Naive thymus-derived CD4-positive, alpha-beta T cell (primary cell): ENCODE measurements at regions of chr1 and their contacts with region 1.

Region 1: GRCh38 chr1:161864577-161864976 is 98.5 kb downstream of the ATF6 start:
- DNase-seq: peak in 7 of 9 donors; percentile 2 to 46 (median 28)
- ATAC-seq: peak; percentile 37
- H3K4me3 ChIP-seq: no peak overlapping the region
- H3K4me3 Mint-ChIP-seq: no peak overlapping the region
- H3K27ac ChIP-seq: no peak overlapping the region
- H3K27ac Mint-ChIP-seq: peak overlapping the region in 2 of 9 donors; percentile 5 to 12
- H3K4me1 ChIP-seq: no peaks in the 10 kb centered on the region
- H3K4me1 Mint-ChIP-seq: no peaks in the 10 kb centered on the region
- H3K27me3 ChIP-seq: no peaks in the 10 kb centered on the region
- H3K27me3 Mint-ChIP-seq: no peaks in the 10 kb centered on the region

Region 2: GRCh38 chr1:161261261-161262235 is 603.0 kb before region 1 on chr1:
- CTCF ChIA-PET with region 1: no interaction called
- POLR2A ChIA-PET with region 1: no interaction called
- intact Hi-C with region 1: no loop called
- DNase-seq: no peak
- ATAC-seq: no peak
- H3K4me3 ChIP-seq: no peak overlapping the region
- H3K4me3 Mint-ChIP-seq: no peak overlapping the region
- H3K27ac ChIP-seq: no peak overlapping the region
- H3K27ac Mint-ChIP-seq: no peak overlapping the region
- H3K4me1 ChIP-seq: peaks cover 0 to 4% of the 10 kb centered on the region in 2 donors
- H3K4me1 Mint-ChIP-seq: peaks cover 6 to 24% (median 19%) of the 10 kb centered on the region in 7 donors
- H3K27me3 ChIP-seq: peaks cover 0 to 13% of the 10 kb centered on the region in 2 donors
- H3K27me3 Mint-ChIP-seq: peaks cover 57 to 64% (median 59%) of the 10 kb centered on the region in 5 donors

Region 3: DNA sequence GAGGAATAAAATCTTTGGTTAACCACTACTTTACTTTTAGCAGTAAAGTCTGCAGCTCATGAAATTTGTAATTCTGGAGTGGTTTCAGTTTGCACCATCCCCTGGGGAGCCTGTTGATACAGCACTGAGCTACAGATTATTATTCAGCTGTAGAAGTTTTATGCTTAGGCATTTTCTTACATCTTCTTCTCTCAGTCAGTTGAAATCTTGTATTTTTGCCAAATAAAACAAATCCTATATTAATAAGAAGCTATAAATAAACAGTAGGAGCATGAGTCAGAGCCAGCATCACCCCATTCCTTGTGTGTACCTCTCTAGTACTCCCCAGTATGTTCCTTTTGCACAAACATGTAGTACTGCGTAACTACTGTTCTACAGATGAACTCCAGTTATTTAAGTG is 20.4 kb after region 1 on chr1:
- CTCF ChIA-PET with region 1: interaction called, 3 read pairs
- POLR2A ChIA-PET with region 1: no interaction called
- intact Hi-C with region 1: loop called in 1 of 2 experiments (anchors 2 kb)
- DNase-seq: no peak
- ATAC-seq: no peak
- H3K4me3 ChIP-seq: no peak overlapping the region
- H3K4me3 Mint-ChIP-seq: no peak overlapping the region
- H3K27ac ChIP-seq: no peak overlapping the region
- H3K27ac Mint-ChIP-seq: peak overlapping the region in 1 of 9 donors; percentile 31
- H3K4me1 ChIP-seq: no peaks in the 10 kb centered on the region
- H3K4me1 Mint-ChIP-seq: peaks cover 0 to 11% (median 1%) of the 10 kb centered on the region in 7 donors
- H3K27me3 ChIP-seq: no peaks in the 10 kb centered on the region
- H3K27me3 Mint-ChIP-seq: no peaks in the 10 kb centered on the region

Region 4: GRCh38 chr1:162023547-162024501 is 159.2 kb after region 1 on chr1 and contains the start of gene OLFML2B:
- CTCF ChIA-PET with region 1: interaction called, 19 read pairs
- POLR2A ChIA-PET with region 1: no interaction called
- intact Hi-C with region 1: loop called in 1 of 2 experiments (anchors 1 kb)
- DNase-seq: peak; percentile 15 to 66 (median 49)
- ATAC-seq: peak; percentile 88
- H3K4me3 ChIP-seq: peak within 1 kb of the TSS; percentile 80
- H3K4me3 Mint-ChIP-seq: peak within 1 kb of the TSS; percentile 89 to 99 (median 94)
- H3K27ac ChIP-seq: no peak within 1 kb of the TSS
- H3K27ac Mint-ChIP-seq: peak within 1 kb of the TSS in 3 of 9 donors; percentile 2 to 55 (median 51)
- H3K4me1 ChIP-seq: peaks cover 0 to 4% of the 10 kb centered on the region in 2 donors
- H3K4me1 Mint-ChIP-seq: peaks cover 6 to 13% (median 9%) of the 10 kb centered on the region in 7 donors
- H3K27me3 ChIP-seq: peaks cover 0 to 3% of the 10 kb centered on the region in 2 donors
- H3K27me3 Mint-ChIP-seq: peaks cover 33 to 54% (median 34%) of the 10 kb centered on the region in 5 donors
- total RNA-seq, gene OLFML2B: 0.27 to 0.47 (median 0.35) TPM in 3 of 5 experiments, not detected in the others

Region 5: DNA sequence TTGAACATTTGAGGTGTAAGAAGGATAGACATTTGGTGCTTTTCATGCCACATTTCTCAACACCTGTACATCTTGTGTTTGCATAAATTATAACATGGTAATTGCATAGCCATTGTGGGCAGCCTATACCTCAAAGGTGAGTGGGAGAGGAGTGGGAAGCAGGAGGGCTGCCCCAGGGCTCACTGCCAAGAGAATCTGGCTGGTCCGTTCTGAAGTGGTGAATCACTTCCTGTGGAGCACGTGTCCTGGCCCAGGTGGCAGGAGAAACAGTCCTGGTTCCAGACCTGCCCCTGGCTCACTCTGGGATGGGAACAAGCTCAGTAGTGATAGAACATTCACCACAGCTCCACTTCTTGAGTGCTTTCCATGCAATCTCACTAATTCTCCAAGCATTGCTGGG is 170.7 kb after region 1 on chr1:
- CTCF ChIA-PET with region 1: interaction called, 65 read pairs
- POLR2A ChIA-PET with region 1: no interaction called
- intact Hi-C with region 1: loop called (anchors 1 to 5 kb)
- DNase-seq: no peak
- ATAC-seq: no peak
- H3K4me3 ChIP-seq: no peak overlapping the region
- H3K4me3 Mint-ChIP-seq: no peak overlapping the region
- H3K27ac ChIP-seq: no peak overlapping the region
- H3K27ac Mint-ChIP-seq: no peak overlapping the region
- H3K4me1 ChIP-seq: no peaks in the 10 kb centered on the region
- H3K4me1 Mint-ChIP-seq: peaks cover 0 to 10% (median 0%) of the 10 kb centered on the region in 7 donors
- H3K27me3 ChIP-seq: no peaks in the 10 kb centered on the region
- H3K27me3 Mint-ChIP-seq: peaks cover under 1 to 25% (median 13%) of the 10 kb centered on the region in 5 donors

Region 6: GRCh38 chr1:162040681-162041080 is 176.1 kb after region 1 on chr1:
- CTCF ChIA-PET with region 1: interaction called, 65 read pairs
- POLR2A ChIA-PET with region 1: interaction called, 3 read pairs
- intact Hi-C with region 1: loop called (anchors 1 to 5 kb)
- DNase-seq: no peak
- ATAC-seq: no peak
- H3K4me3 ChIP-seq: no peak overlapping the region
- H3K4me3 Mint-ChIP-seq: no peak overlapping the region
- H3K27ac ChIP-seq: no peak overlapping the region
- H3K27ac Mint-ChIP-seq: peak overlapping the region in 1 of 9 donors; percentile 12
- H3K4me1 ChIP-seq: no peaks in the 10 kb centered on the region
- H3K4me1 Mint-ChIP-seq: peaks cover 0 to 4% (median 0%) of the 10 kb centered on the region in 7 donors
- H3K27me3 ChIP-seq: no peaks in the 10 kb centered on the region
- H3K27me3 Mint-ChIP-seq: peaks cover 5 to 20% (median 10%) of the 10 kb centered on the region in 5 donors